CD8-positive, alpha-beta T cell (primary cell): ENCODE measurements at regions of chr1 and their contacts with region 1.

Region 1: DNA sequence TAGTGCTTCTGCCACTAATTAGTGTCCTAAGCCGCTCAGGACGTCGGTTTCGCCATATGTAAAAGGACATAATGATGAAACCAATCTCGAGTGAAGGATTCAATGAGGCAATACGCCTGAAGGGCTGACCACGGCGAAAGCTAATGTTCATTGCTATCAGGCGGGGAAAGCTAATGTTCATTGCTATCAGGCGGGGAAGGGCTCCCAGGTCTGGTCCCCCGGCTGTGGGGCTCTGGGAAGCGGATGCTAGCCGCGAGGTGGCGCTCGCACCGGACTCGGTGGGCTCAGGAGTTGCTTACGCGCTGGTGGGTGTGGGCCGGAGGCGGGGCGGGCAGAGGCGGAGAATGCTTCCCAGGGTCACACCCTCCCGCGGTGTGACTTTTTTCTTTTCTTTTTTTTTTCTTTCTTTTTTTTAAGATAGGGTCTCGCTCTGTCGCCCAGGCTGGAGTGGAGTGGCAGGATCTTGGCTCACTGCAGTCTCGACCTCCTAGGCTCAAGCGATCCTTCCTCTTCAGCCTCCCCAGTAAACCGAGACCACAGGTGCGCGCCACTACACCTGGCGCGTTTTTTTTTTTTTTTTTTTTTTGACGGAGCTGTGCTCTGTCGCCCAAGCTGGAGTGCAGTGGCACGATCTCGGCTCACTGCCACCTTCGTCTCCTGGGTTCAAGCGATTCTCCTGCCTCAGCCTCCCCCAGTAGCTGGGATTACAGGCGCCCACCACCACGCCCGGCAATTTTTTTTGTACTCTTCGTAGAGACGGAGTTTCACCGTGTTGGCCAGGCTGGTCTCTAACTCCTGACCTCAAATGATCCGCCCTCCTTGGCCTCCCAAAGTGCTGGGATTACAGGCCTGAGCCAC is 1.1 kb upstream of the PEAR1 start:
- DNase-seq: peak; percentile 65 to 91 (median 86)
- ATAC-seq: peak; percentile 97
- H3K4me3 ChIP-seq: peak overlapping the region; percentile 33 to 36
- H3K4me3 Mint-ChIP-seq: peak overlapping the region; percentile 66
- H3K27ac ChIP-seq: no peak overlapping the region
- H3K27ac Mint-ChIP-seq: no peak overlapping the region
- H3K4me1 ChIP-seq: peaks cover 14% of the 10 kb centered on the region
- H3K4me1 Mint-ChIP-seq: peaks cover 13% of the 10 kb centered on the region
- H3K27me3 ChIP-seq: peaks cover 0 to 25% of the 10 kb centered on the region in 2 experiments
- H3K27me3 Mint-ChIP-seq: peaks cover 53% of the 10 kb centered on the region
- CTCF ChIP-seq: peak; percentile 61

Region 2: DNA sequence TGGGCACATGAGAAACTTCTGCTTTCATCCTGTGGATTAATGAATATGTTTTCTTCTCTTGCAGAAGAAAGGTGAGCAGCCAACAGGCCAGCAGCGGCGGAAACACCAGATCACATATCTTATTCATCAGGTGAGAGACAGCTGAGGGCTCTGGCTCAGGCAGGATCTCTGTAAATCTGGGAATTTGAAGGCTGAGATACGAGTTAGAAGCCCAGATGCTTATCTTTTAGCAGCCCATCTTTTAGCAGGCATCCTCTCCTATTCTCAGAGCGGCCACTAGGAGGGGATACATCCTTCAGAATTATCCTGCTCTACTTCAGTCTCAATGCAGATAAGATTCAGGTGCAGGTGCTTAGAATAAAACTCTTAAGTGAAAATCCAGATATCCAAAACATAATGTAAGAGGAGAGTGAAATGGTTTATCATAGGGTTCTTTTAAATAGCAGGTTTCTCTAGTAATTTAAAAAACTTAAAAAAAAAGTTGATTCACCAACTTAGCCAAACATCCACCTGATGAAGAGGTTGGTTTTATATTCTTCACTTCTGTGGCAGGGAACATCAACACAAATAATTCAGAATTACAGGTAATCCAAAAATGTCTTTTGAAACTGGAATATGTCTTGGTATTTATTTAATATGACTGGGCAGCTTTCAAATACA is 95.1 kb before region 1 on chr1:
- CTCF ChIA-PET with region 1: interaction called, 74 read pairs
- POLR2A ChIA-PET with region 1: no interaction called
- intact Hi-C with region 1: loop called in 1 of 2 experiments (anchors 1 kb)
- DNase-seq: peak in 7 of 9 experiments; percentile 48 to 84 (median 68)
- ATAC-seq: peak; percentile 91
- H3K4me3 ChIP-seq: no peak overlapping the region
- H3K4me3 Mint-ChIP-seq: no peak overlapping the region
- H3K27ac ChIP-seq: no peak overlapping the region
- H3K27ac Mint-ChIP-seq: no peak overlapping the region
- H3K4me1 ChIP-seq: no peaks in the 10 kb centered on the region
- H3K4me1 Mint-ChIP-seq: peaks cover 8% of the 10 kb centered on the region
- H3K27me3 ChIP-seq: no peaks in the 10 kb centered on the region
- H3K27me3 Mint-ChIP-seq: no peaks in the 10 kb centered on the region
- CTCF ChIP-seq: peak; percentile 87

Region 3: GRCh38 chr1:156833603-156834002 is 58.8 kb before region 1 on chr1:
- CTCF ChIA-PET with region 1: interaction called, 69 read pairs
- POLR2A ChIA-PET with region 1: no interaction called
- intact Hi-C with region 1: loop called in 1 of 2 experiments (anchors 5 kb)
- DNase-seq: peak in 3 of 9 experiments; percentile 40 to 70 (median 40)
- ATAC-seq: peak; percentile 83
- H3K4me3 ChIP-seq: no peak overlapping the region
- H3K4me3 Mint-ChIP-seq: no peak overlapping the region
- H3K27ac ChIP-seq: no peak overlapping the region
- H3K27ac Mint-ChIP-seq: no peak overlapping the region
- H3K4me1 ChIP-seq: no peaks in the 10 kb centered on the region
- H3K4me1 Mint-ChIP-seq: peaks cover 4% of the 10 kb centered on the region
- H3K27me3 ChIP-seq: no peaks in the 10 kb centered on the region
- H3K27me3 Mint-ChIP-seq: peaks cover 7% of the 10 kb centered on the region
- CTCF ChIP-seq: no peak

Region 4: GRCh38 chr1:156860113-156860627 is 32.2 kb before region 1 on chr1:
- CTCF ChIA-PET with region 1: interaction called, 33 read pairs
- POLR2A ChIA-PET with region 1: no interaction called
- intact Hi-C with region 1: loop called in 1 of 2 experiments (anchors 1 kb)
- DNase-seq: peak in 8 of 9 experiments; percentile 47 to 78 (median 63)
- ATAC-seq: peak; percentile 70
- H3K4me3 ChIP-seq: peak overlapping the region; percentile 54 to 73
- H3K4me3 Mint-ChIP-seq: peak overlapping the region; percentile 77
- H3K27ac ChIP-seq: no peak overlapping the region
- H3K27ac Mint-ChIP-seq: peak overlapping the region; percentile 14
- H3K4me1 ChIP-seq: peaks cover 27% of the 10 kb centered on the region
- H3K4me1 Mint-ChIP-seq: peaks cover 25% of the 10 kb centered on the region
- H3K27me3 ChIP-seq: peaks cover 42 to 44% of the 10 kb centered on the region in 2 experiments
- H3K27me3 Mint-ChIP-seq: peaks cover 51% of the 10 kb centered on the region
- CTCF ChIP-seq: peak; percentile 79

Region 5: DNA sequence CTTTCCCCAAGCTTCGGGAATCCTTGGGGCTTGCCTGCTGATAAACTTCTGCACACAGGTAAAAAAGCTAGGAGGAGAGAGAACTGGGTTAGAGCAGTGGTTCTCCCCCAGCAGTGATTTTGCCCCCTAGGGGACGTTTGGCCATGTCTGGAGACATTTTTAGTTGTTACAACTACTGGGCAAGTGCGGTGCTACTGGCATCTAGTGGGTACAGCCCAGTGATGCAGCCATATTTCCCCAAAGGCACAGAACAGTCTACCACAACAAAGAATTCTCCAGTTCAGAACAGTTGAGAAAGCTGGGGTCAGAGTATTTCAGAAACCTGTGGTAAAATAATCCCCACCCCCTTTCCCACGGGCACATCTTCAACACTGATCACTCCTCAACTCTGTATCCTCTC is 69.3 kb after region 1 on chr1:
- CTCF ChIA-PET with region 1: interaction called, 56 read pairs
- POLR2A ChIA-PET with region 1: no interaction called
- intact Hi-C with region 1: loop called in 1 of 2 experiments (anchors 2 kb)
- DNase-seq: peak in 5 of 9 experiments; percentile 17 to 51 (median 36)
- ATAC-seq: peak; percentile 65
- H3K4me3 ChIP-seq: no peak overlapping the region
- H3K4me3 Mint-ChIP-seq: no peak overlapping the region
- H3K27ac ChIP-seq: no peak overlapping the region
- H3K27ac Mint-ChIP-seq: no peak overlapping the region
- H3K4me1 ChIP-seq: peaks cover 33% of the 10 kb centered on the region
- H3K4me1 Mint-ChIP-seq: peaks cover 31% of the 10 kb centered on the region
- H3K27me3 ChIP-seq: no peaks in the 10 kb centered on the region
- H3K27me3 Mint-ChIP-seq: no peaks in the 10 kb centered on the region
- CTCF ChIP-seq: peak; percentile 46

Region 6: DNA sequence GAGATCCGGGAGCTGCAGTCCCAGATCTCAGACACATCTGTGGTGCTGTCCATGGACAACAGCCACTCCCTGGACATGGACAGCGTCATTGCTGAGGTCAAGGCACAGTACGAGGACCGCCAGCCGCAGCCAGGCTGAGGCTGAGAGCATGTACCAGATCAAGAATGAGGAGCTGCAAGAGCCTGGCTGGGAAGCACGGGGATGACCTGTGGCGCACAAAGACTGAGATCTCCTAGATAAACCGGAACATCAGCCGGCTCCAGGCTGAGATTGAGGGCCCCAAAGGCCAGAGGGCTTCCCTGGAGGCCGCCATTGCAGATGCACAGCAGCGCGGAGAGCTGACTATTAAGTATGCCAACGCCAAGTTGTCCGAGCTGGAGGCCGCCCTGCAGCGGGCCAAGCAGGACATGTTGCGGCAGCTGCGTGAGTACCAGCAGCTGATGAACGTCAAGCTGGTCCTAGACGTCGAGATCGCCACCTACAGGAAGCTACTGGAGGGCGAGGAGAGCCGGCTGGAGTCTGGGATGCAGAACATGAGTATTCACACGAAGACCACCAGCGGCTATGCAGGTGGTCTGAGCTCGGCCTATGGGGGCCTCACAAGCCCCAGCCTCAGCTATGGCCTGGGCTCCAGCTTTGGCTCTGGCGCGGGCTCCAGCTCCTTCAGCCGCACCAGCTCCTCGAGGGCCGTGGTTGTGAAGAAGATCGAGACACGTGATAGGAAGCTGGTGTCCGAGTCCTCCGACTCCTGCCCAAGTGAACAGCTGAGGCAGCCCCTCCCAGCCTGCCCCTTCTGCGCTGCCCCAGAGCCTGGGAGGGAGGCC is 181.7 kb after region 1 on chr1:
- CTCF ChIA-PET with region 1: interaction called, 5 read pairs
- POLR2A ChIA-PET with region 1: no interaction called
- intact Hi-C with region 1: loop called in 1 of 2 experiments (anchors 10 kb)
- DNase-seq: peak in 6 of 9 experiments; percentile 5 to 43 (median 35)
- ATAC-seq: no peak
- H3K4me3 ChIP-seq: no peak overlapping the region
- H3K4me3 Mint-ChIP-seq: peak overlapping the region; percentile 6
- H3K27ac ChIP-seq: no peak overlapping the region
- H3K27ac Mint-ChIP-seq: no peak overlapping the region
- H3K4me1 ChIP-seq: no peaks in the 10 kb centered on the region
- H3K4me1 Mint-ChIP-seq: peaks cover 8% of the 10 kb centered on the region
- H3K27me3 ChIP-seq: peaks cover 3 to 4% of the 10 kb centered on the region in 2 experiments
- H3K27me3 Mint-ChIP-seq: peaks cover 28% of the 10 kb centered on the region
- CTCF ChIP-seq: no peak

Region 7: GRCh38 chr1:157124855-157125254 is 232.4 kb after region 1 on chr1:
- CTCF ChIA-PET with region 1: no interaction called
- POLR2A ChIA-PET with region 1: no interaction called
- intact Hi-C with region 1: no loop called
- DNase-seq: peak in 2 of 9 experiments; percentile 14 to 33
- ATAC-seq: no peak
- H3K4me3 ChIP-seq: no peak overlapping the region
- H3K4me3 Mint-ChIP-seq: no peak overlapping the region
- H3K27ac ChIP-seq: no peak overlapping the region
- H3K27ac Mint-ChIP-seq: no peak overlapping the region
- H3K4me1 ChIP-seq: no peaks in the 10 kb centered on the region
- H3K4me1 Mint-ChIP-seq: peaks cover 35% of the 10 kb centered on the region
- H3K27me3 ChIP-seq: no peaks in the 10 kb centered on the region
- H3K27me3 Mint-ChIP-seq: no peaks in the 10 kb centered on the region
- CTCF ChIP-seq: no peak